ENCODE measurements at regions of chr3 and their contacts with region 1.

Region 1: DNA sequence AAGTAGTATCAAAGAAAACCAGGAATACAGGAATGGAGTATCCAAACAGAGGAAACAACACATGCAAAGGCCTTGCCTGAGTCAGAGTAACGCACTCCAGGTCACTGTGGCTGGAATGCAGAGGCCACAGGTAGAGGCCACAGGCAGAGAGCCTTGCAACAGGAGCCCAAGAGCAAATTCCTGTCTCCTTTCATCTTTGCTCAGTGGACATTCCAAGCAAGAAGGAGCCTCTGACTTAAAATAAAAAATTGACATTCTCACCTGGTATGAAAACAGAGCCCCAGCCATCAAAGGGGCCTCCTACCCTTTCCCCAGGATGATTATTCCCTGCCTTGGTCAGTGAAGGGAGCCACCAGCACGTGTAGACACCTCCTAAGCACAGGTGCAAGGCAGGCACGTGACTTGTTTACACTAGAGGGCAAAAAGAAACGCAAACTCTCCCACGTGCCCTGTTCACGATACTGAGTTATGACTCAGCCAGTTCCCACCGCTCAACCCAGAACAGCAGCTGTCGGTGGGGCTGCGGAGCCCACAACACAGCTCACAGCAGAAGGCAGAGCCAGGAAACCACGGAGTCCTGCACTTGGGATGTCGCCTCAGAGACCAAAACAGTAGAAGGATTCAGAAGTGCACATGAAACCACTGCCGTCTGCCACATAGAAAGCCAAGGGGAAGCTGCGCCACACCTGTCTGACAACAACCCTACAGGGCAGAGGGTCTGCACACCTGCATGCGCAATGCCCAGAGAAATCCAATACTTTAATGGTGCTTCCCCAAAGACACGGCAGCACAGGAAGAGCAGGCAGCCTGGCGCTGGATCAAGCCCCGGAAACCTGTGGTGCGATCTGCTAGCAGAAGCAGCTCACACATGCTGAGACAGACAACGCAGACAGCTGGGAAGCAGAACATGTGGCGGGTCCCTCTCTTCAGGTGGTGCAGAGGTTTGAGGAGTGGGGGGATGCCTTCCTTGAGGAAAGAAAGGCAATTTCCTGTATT is 52.1 kb downstream of the ITGB5 start:
- DNase-seq: peak; percentile 99
- ATAC-seq: peak; percentile 85
- H3K4me3 ChIP-seq: peak overlapping the region in 1 of 3 experiments; percentile 52; a peak in 2 of 6 replicates
- H3K27ac ChIP-seq: peak overlapping the region; percentile 100
- H3K4me1 ChIP-seq: peaks cover 98% of the 10 kb centered on the region
- H3K27me3 ChIP-seq: no peaks in the 10 kb centered on the region
- CTCF ChIP-seq: peak; percentile 45
- EP300 ChIP-seq: peak; percentile 56 to 90; a peak in 3 of 4 replicates
- POLR2A ChIP-seq: peak in 1 of 2 experiments; percentile 71; a peak in 3 of 4 replicates
- RAD21 ChIP-seq: peak; percentile 54

Region 2: DNA sequence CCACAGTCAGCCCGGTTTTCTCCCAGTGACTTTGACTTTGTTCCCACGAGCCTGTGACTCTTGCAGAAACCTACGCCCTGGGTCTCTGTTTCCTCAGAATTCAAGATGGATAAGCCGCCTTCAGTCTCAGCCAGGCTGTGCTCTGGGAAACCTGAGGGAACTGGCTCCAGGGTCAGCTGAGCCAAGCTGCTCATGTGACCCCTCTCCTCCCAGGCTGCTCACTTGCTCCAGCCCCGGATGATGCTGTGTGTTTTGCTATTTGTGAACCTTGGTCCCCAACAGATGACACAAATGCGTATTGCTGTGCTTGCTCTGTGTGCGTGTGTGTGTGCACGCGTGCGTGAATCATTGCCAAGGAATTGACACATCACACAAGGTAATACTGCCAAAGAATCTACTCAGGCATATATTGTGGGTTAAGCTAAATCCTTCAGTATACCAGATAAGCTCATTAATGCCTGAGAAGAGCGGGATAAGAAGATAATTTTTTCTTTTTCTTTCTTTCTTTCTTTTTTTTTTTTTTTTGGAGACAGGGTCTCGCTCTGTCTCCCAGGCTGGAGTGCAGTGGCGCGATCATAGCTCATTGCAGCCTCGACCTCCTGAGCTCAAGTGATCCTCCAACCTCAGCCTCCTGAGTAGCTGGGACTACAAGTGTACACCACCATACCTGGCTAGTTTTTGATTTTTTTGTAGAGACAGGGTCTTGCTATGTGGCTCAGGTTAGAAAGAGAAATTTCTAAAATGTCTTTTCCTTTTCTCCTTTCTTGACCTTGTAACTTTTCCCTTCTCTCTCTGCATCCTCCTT is 133.9 kb before region 1 on chr3:
- CTCF ChIA-PET with region 1: no interaction called
- POLR2A ChIA-PET with region 1: no interaction called
- in situ Hi-C with region 1: no loop called
- intact Hi-C with region 1: loop called (anchors 2 kb)
- DNase-seq: peak; percentile 99
- ATAC-seq: peak; percentile 91
- H3K4me3 ChIP-seq: peak overlapping the region; percentile 48 to 76 (median 64)
- H3K27ac ChIP-seq: peak overlapping the region; percentile 98
- H3K4me1 ChIP-seq: peaks cover 67% of the 10 kb centered on the region
- H3K27me3 ChIP-seq: no peaks in the 10 kb centered on the region; a peak in 1 of 5 replicates
- CTCF ChIP-seq: no peak; the same call in 1 of the 2 replicates
- EP300 ChIP-seq: peak; percentile 80 to 85
- POLR2A ChIP-seq: peak; percentile 90 to 91
- RAD21 ChIP-seq: peak; percentile 36; the same call in 1 of the 2 replicates

Region 3: DNA sequence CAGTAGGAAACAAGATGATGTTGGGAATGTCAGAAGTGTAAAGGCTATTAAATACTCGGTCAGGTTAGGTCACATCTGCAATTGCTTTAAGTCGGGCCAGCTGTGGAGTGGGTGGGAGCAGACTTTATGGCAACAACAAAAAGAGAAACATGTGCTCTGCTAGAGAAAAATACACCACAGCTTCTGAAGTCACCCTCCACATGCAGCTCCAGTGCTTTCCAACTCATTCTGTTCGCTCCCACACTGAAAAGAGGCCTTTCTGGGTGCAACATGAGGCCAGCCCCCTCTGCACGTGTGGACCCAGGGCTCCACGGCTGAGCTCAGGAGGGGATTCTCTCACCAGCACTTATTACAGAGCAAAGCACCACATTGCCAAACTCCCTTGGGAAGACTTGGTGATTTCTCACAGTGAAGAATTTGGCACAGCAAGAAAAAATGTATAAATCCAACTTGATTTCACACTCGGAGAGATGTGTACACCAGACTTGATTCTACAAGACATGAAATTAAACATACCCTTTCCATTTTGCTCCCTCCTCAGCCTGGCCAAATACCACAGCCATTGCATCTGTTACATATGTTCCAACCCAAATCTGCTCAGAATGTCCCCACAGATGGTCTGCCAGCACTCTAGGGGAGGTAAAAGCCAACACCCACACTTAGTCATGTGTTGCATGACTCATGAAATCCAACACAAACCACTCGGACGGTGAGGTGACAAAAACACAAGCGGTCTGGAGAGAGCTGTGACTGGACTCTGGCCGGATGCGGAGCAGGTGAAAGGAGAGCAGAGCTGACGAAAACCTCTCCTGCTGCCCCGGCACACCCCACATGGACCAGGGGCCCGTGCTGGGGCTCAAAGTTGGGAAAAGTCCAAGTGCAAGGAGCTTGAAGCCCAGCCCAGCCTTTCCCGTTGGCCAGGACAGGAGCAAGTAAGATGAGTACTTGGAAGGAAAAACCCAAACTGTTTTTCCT is 22.4 kb before region 1 on chr3:
- CTCF ChIA-PET with region 1: no interaction called
- POLR2A ChIA-PET with region 1: interaction called, 15 read pairs
- in situ Hi-C with region 1: no loop called
- intact Hi-C with region 1: loop called (anchors 2 kb)
- DNase-seq: peak; percentile 74
- ATAC-seq: peak; percentile 72
- H3K4me3 ChIP-seq: no peak overlapping the region
- H3K27ac ChIP-seq: peak overlapping the region; percentile 72
- H3K4me1 ChIP-seq: peaks cover 62% of the 10 kb centered on the region
- H3K27me3 ChIP-seq: no peaks in the 10 kb centered on the region
- CTCF ChIP-seq: no peak
- EP300 ChIP-seq: peak in 1 of 2 experiments; percentile 60; a peak in 2 of 4 replicates
- POLR2A ChIP-seq: peak; percentile 36 to 55; a peak in 1 of 4 replicates
- RAD21 ChIP-seq: no peak

Region 4: DNA sequence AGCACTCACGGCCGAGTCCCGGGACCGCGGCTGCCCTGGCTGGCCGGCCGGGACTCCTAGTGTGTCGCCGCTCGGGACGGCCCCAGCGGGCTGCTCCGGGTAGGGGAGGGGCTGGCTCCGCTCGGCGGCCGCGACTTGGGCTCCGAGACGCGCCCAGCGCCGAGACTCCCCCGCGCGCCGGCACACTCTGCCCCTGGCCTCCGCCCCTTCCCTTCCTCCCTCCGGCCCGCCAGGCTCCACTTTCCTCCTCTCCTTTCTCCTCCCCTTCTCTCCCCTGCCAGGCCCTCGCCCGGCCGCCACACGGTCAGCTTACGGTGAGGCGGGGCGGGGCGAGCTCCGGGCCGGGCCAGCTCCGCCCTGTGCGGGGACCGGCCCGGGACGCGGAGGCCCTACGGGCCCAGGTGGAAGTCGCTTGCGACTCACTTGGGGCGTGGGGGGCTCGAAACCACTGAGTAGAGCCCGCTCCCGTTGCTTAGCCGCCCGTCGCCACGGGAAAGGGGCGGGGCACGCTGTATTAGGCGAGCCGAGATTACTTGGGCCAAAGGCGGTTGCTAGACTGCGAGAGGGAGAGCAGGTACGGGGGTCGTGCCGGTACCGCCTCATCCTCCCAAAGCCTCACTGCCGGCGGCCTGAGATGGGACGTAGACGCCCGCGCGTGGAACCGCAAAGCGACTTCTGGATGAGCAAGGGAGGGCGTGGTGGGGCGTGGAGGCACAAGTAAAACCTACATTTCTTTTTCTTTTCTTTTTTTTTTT is 52.3 kb after region 1 on chr3 and contains the start of gene ITGB5:
- CTCF ChIA-PET with region 1: no interaction called
- POLR2A ChIA-PET with region 1: interaction called, 14 read pairs
- in situ Hi-C with region 1: no loop called
- intact Hi-C with region 1: loop called (anchors 2 kb)
- DNase-seq: peak; percentile 61
- ATAC-seq: peak; percentile 81
- H3K4me3 ChIP-seq: peak within 1 kb of the TSS; percentile 82 to 85 (median 85)
- H3K27ac ChIP-seq: peak within 1 kb of the TSS; percentile 90
- H3K4me1 ChIP-seq: peaks cover 61% of the 10 kb centered on the region
- H3K27me3 ChIP-seq: no peaks in the 10 kb centered on the region
- CTCF ChIP-seq: no peak; the same call in 1 of the 2 replicates
- EP300 ChIP-seq: no peak
- POLR2A ChIP-seq: peak in 1 of 2 experiments; percentile 69; a peak in 2 of 4 replicates
- RAD21 ChIP-seq: peak; percentile 63
- total RNA-seq, gene ITGB5: 50.2 and 74.1 TPM in 2 replicates

Region 5: DNA sequence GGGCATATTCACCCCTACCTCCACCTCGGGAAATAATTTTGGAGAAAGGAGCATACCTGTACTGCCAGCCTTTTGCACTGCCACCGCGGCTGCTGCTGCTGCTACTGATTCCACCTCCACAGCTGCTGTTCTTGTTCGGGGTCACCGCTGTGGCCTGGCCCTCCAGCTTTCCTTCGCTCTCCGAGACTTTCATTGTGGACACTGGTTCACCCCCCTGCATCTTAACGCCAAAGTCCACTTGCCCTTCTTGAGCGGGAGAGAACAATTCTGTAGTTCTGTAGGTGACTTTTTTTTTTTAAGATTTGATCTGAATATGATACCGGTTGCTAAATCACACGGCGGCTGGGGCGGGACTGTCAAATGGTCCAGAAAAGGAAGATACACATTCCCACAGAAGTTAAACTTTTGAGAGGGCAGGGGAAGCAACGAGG is 759.6 kb after region 1 on chr3:
- CTCF ChIA-PET with region 1: no interaction called
- POLR2A ChIA-PET with region 1: no interaction called
- in situ Hi-C with region 1: no loop called
- intact Hi-C with region 1: loop called (anchors 10 kb)
- DNase-seq: no peak
- ATAC-seq: 0 out of 3 replicates have a peak, but pooled peaks have one; percentile 7
- H3K4me3 ChIP-seq: peak overlapping the region; percentile 84 to 96 (median 85)
- H3K27ac ChIP-seq: peak overlapping the region; percentile 97
- H3K4me1 ChIP-seq: peaks cover 43% of the 10 kb centered on the region
- H3K27me3 ChIP-seq: no peaks in the 10 kb centered on the region; a peak in 1 of 5 replicates
- CTCF ChIP-seq: no peak
- EP300 ChIP-seq: no peak
- POLR2A ChIP-seq: no peak
- RAD21 ChIP-seq: no peak

Measured in HepG2 (cell line).